ENCODE measurements at regions of chr1 and their contacts with region 1.

Region 1: GRCh38 chr1:226679853-226680516 is 59.1 kb downstream of the ITPKB start:
- DNase-seq: peak; percentile 51 to 88 (median 78)
- ATAC-seq: peak; percentile 18
- H3K4me3 ChIP-seq: peak overlapping the region; percentile 26 to 34
- H3K4me3 Mint-ChIP-seq: peak overlapping the region; percentile 75
- H3K27ac ChIP-seq: peak overlapping the region; percentile 69 to 86
- H3K27ac Mint-ChIP-seq: peak overlapping the region; percentile 99
- H3K4me1 ChIP-seq: peaks cover 99% of the 10 kb centered on the region
- H3K4me1 Mint-ChIP-seq: peaks cover 99% of the 10 kb centered on the region
- H3K27me3 ChIP-seq: no peaks in the 10 kb centered on the region
- H3K27me3 Mint-ChIP-seq: no peaks in the 10 kb centered on the region
- CTCF ChIP-seq: no peak

Region 2: DNA sequence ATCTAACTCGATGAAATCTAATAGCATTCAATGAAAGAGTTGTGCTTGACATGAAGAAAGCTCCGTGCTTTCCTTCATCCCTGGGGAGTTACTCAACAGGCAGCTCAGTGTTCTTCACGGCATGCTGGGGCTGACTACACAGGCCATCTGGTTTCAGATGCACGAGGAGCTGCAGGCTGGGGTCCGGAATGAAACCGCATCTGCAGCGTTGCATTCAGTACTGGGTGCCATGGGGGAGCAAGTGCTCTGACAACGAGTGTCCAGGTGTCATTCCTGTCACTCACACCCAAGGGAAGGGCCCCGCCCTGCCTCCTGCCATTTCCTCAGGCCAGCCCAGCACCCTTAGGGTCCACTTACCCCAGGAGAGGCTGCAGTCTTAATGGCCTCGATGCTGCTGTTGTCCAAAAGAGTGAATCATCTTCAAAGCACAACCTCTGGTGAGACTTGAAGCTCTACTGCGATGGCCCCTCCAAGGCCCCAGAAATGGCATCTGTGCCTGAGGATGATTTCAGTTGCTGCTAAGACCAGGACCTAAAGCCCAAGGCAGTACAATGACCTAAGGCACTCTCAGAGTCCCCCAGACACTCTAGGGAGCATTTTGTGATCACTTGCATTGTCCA is 70.0 kb before region 1 on chr1:
- CTCF ChIA-PET with region 1: no interaction called
- POLR2A ChIA-PET with region 1: no interaction called
- intact Hi-C with region 1: no loop called
- DNase-seq: no peak
- ATAC-seq: no peak
- H3K4me3 ChIP-seq: no peak overlapping the region
- H3K4me3 Mint-ChIP-seq: no peak overlapping the region
- H3K27ac ChIP-seq: no peak overlapping the region
- H3K27ac Mint-ChIP-seq: no peak overlapping the region
- H3K4me1 ChIP-seq: no peaks in the 10 kb centered on the region
- H3K4me1 Mint-ChIP-seq: no peaks in the 10 kb centered on the region
- H3K27me3 ChIP-seq: peaks cover 0 to 4% of the 10 kb centered on the region in 2 experiments
- H3K27me3 Mint-ChIP-seq: peaks cover 3% of the 10 kb centered on the region
- CTCF ChIP-seq: no peak

Region 3: DNA sequence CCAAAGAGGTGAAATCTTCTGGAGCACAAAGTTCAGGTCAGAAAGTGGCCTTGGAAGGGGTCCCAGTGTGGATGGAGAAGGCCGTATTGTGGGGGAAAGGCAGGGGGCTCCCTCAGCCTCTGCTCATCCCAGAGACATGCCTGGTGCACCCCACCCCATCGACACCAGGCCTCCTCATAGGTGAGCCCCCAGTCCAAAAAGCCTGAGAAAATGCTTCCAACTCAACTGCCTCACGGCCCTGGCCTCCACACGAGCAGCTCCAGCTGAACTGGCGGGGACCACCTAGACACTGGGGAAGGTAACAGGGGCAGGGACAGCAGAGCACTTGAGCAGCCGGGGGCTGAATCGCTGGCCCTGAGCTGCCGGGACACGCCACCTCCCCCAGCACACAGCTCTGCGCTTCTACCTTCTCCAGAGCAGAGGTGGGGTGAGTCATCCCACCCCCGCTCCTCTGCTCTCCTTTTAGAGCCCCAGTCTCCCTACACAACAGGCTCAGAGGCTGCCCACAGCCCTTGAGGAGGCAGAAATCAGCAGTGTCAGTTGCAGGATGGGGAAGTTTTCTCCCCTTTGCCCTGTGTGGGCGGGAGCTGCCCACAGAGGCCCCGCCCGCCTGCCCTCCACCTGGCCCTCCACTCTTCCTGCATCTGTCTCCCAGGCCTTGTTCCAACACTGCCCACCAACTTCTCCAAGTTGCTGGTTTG is 37.0 kb before region 1 on chr1:
- CTCF ChIA-PET with region 1: interaction called, 92 read pairs
- POLR2A ChIA-PET with region 1: interaction called, 6 read pairs
- intact Hi-C with region 1: no loop called
- DNase-seq: peak in 6 of 9 experiments; percentile 49 to 73 (median 66)
- ATAC-seq: peak; percentile 76
- H3K4me3 ChIP-seq: no peak overlapping the region
- H3K4me3 Mint-ChIP-seq: peak overlapping the region; percentile 54
- H3K27ac ChIP-seq: peak overlapping the region; percentile 27 to 34
- H3K27ac Mint-ChIP-seq: peak overlapping the region; percentile 89
- H3K4me1 ChIP-seq: peaks cover 57% of the 10 kb centered on the region
- H3K4me1 Mint-ChIP-seq: peaks cover 55% of the 10 kb centered on the region
- H3K27me3 ChIP-seq: no peaks in the 10 kb centered on the region
- H3K27me3 Mint-ChIP-seq: no peaks in the 10 kb centered on the region
- CTCF ChIP-seq: no peak

Region 4: GRCh38 chr1:226649780-226650179 is 30.2 kb before region 1 on chr1:
- CTCF ChIA-PET with region 1: interaction called, 61 read pairs
- POLR2A ChIA-PET with region 1: interaction called, 9 read pairs
- intact Hi-C with region 1: no loop called
- DNase-seq: peak in 6 of 9 experiments; percentile 53 to 74 (median 64)
- ATAC-seq: no peak
- H3K4me3 ChIP-seq: no peak overlapping the region
- H3K4me3 Mint-ChIP-seq: no peak overlapping the region
- H3K27ac ChIP-seq: peak overlapping the region in 1 of 2 experiments; percentile 23
- H3K27ac Mint-ChIP-seq: no peak overlapping the region
- H3K4me1 ChIP-seq: peaks cover 52% of the 10 kb centered on the region
- H3K4me1 Mint-ChIP-seq: peaks cover 57% of the 10 kb centered on the region
- H3K27me3 ChIP-seq: no peaks in the 10 kb centered on the region
- H3K27me3 Mint-ChIP-seq: no peaks in the 10 kb centered on the region
- CTCF ChIP-seq: peak; percentile 59

Region 5: GRCh38 chr1:226656601-226657277 is 23.2 kb before region 1 on chr1:
- CTCF ChIA-PET with region 1: interaction called, 61 read pairs
- POLR2A ChIA-PET with region 1: interaction called, 35 read pairs
- intact Hi-C with region 1: no loop called
- DNase-seq: peak in 6 of 9 experiments; percentile 39 to 91 (median 71)
- ATAC-seq: peak; percentile 68
- H3K4me3 ChIP-seq: no peak overlapping the region
- H3K4me3 Mint-ChIP-seq: peak overlapping the region; percentile 61
- H3K27ac ChIP-seq: no peak overlapping the region
- H3K27ac Mint-ChIP-seq: no peak overlapping the region
- H3K4me1 ChIP-seq: no peaks in the 10 kb centered on the region
- H3K4me1 Mint-ChIP-seq: peaks cover 30% of the 10 kb centered on the region
- H3K27me3 ChIP-seq: no peaks in the 10 kb centered on the region
- H3K27me3 Mint-ChIP-seq: no peaks in the 10 kb centered on the region
- CTCF ChIP-seq: no peak

Region 6: DNA sequence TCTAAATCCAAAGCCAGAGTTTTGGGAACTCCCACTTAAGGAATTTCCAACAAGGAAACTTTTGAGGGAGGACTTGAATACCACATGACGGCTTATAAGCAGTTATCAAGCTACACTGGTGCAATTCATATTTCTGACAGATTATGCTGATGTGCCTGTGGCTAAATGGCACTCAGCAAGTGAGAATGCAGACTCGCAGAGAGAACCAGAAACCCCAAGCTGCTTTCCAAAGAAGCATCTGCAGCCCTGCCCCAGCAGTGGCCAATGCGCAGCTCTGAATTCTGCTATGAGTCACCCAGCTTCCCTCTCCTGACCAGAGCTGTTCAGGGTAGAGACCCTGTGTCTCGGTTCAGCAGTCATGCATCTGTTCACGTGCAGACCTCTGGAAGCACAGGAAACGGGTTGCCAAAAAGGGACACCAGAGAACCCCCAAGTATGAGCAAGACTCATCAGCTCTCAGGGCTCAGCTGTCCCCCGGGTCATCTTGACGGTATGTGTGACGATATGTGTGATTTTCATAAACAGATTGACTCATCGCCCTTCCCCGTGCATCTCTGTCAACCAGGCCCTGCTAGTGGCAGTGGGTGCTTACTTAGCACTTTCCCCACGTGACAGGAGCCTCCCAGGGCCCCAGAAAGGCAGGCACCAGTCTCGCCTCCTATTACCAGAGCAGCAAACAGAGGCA is 17.2 kb before region 1 on chr1:
- CTCF ChIA-PET with region 1: interaction called, 9 read pairs
- POLR2A ChIA-PET with region 1: interaction called, 35 read pairs
- intact Hi-C with region 1: loop called (anchors 1 kb)
- DNase-seq: peak; percentile 69 to 99 (median 85)
- ATAC-seq: peak; percentile 83
- H3K4me3 ChIP-seq: peak overlapping the region; percentile 1 to 13
- H3K4me3 Mint-ChIP-seq: peak overlapping the region; percentile 59
- H3K27ac ChIP-seq: peak overlapping the region in 1 of 2 experiments; percentile 65
- H3K27ac Mint-ChIP-seq: no peak overlapping the region
- H3K4me1 ChIP-seq: no peaks in the 10 kb centered on the region
- H3K4me1 Mint-ChIP-seq: peaks cover 89% of the 10 kb centered on the region
- H3K27me3 ChIP-seq: no peaks in the 10 kb centered on the region
- H3K27me3 Mint-ChIP-seq: no peaks in the 10 kb centered on the region
- CTCF ChIP-seq: no peak

Region 7: GRCh38 chr1:226702957-226703831 is 23.2 kb after region 1 on chr1:
- CTCF ChIA-PET with region 1: no interaction called
- POLR2A ChIA-PET with region 1: interaction called, 11 read pairs
- intact Hi-C with region 1: loop called (anchors 1 to 2 kb)
- DNase-seq: peak; percentile 56 to 94 (median 80)
- ATAC-seq: peak; percentile 82
- H3K4me3 ChIP-seq: peak overlapping the region; percentile 51 to 54
- H3K4me3 Mint-ChIP-seq: peak overlapping the region; percentile 72
- H3K27ac ChIP-seq: peak overlapping the region; percentile 72 to 92
- H3K27ac Mint-ChIP-seq: peak overlapping the region; percentile 92
- H3K4me1 ChIP-seq: peaks cover 85% of the 10 kb centered on the region
- H3K4me1 Mint-ChIP-seq: peaks cover 88% of the 10 kb centered on the region
- H3K27me3 ChIP-seq: no peaks in the 10 kb centered on the region
- H3K27me3 Mint-ChIP-seq: no peaks in the 10 kb centered on the region
- CTCF ChIP-seq: no peak

Measured in CD8-positive, alpha-beta T cell (primary cell).